Activated CD4-positive, alpha-beta T cell treated with anti-CD3 and anti-CD28 coated beads for 36 hours (primary cell): ENCODE measurements at regions of chr1 and their contacts with region 1.

Region 1: DNA sequence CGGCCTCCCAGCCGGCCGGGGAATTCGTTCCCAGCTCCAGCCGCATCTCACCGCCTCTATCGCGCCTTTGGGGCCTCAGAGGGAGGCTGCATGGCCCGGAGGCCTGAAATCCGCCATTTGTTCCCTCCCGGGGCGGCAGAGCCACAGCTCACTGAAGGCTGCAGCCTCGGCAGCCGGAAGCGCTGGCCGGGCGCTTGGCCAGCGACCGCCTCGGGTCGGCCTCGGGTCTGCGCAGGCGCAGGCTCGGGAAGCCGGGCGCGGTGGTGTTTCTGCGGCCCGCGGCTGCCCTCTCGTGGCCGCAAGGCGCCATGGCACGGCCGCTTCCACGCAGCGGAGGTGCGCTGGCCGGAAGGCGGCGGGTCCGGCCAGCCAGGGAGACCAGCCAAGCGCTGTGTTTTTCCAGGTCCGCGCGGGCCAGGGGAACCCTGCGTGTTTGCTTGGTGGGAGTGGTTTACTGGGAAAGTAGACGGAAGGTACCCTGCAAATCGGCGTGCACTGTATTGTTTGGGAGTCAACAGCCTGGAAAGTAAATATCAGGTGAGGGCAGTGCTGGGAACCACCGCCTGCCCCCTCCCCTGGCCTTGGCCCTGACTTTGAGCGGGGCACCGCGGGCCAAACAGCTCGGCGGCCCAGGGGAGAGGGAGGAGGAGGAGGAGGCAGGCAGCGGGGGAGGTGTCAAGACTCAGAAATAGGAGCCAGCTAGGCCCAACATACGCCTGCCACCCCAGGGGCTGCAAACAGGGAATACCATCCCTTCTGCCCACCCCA is 52.7 kb upstream of the CD34 start:
- DNase-seq: peak; percentile 90
- ATAC-seq: peak; percentile 82
- H3K4me3 Mint-ChIP-seq: peak overlapping the region; percentile 75
- H3K27ac Mint-ChIP-seq: peak overlapping the region; percentile 71
- H3K4me1 Mint-ChIP-seq: peaks cover 2% of the 10 kb centered on the region
- H3K27me3 Mint-ChIP-seq: peaks cover 18% of the 10 kb centered on the region

Region 2: DNA sequence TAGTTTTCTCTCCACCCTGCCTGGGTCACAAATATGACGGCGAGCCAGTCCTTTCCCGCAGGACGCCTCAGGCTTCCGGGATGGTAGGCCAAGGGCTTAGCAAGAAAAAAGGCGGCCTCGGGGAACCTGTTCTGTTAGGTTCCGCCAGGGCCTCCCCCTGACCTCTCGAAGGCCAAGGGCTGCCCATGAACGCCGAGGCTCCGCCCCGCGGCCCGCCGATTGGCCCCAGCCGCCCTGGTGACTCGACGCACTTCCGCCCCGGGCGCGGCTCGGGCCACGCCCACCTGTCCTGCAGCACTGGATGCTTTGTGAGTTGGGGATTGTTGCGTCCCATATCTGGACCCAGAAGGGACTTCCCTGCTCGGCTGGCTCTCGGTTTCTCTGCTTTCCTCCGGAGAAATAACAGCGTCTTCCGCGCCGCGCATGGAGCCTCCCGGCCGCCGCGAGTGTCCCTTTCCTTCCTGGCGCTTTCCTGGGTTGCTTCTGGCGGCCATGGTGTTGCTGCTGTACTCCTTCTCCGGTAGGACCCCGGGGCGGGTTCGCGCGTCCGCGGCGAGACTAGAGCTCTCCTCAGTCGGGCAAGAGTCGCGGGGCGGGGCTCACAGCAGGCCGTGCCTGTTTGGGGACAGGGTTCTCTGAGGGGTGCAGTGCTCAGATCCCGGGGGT is 211.7 kb before region 1 on chr1 and contains the start of gene CD46:
- CTCF ChIA-PET with region 1: no interaction called
- POLR2A ChIA-PET with region 1: no interaction called
- intact Hi-C with region 1: loop called in 1 of 2 experiments (anchors 1 kb)
- DNase-seq: peak; percentile 97
- ATAC-seq: peak; percentile 97
- H3K4me3 Mint-ChIP-seq: peak within 1 kb of the TSS; percentile 99
- H3K27ac Mint-ChIP-seq: peak within 1 kb of the TSS; percentile 97
- H3K4me1 Mint-ChIP-seq: peaks cover 62% of the 10 kb centered on the region
- H3K27me3 Mint-ChIP-seq: no peaks in the 10 kb centered on the region
- total RNA-seq, gene CD46: 92.2 to 92.7 TPM

Region 3: DNA sequence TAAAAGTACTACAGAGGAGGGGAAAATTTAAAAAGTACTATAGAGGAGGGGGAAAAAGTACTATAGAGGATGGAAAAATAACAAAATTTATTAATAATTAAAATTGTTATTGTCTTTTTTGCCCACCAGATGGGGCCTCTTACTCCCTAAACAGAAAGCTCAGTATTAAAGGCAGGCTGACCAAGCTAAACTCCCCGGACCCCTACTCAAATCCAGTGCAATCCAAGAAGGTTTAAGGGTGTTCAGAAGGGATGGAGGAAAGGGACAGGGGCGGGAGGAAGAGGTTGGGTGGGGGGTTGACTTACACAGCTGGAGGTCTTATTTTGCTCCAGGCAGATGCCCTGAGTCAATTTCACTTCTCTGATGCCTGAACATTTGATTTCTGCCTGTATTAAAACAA is 66.4 kb before region 1 on chr1:
- CTCF ChIA-PET with region 1: interaction called, 15 read pairs
- POLR2A ChIA-PET with region 1: no interaction called
- intact Hi-C with region 1: no loop called
- DNase-seq: no peak
- ATAC-seq: no peak
- H3K4me3 Mint-ChIP-seq: no peak overlapping the region
- H3K27ac Mint-ChIP-seq: no peak overlapping the region
- H3K4me1 Mint-ChIP-seq: no peaks in the 10 kb centered on the region
- H3K27me3 Mint-ChIP-seq: no peaks in the 10 kb centered on the region

Region 4: GRCh38 chr1:207973898-207974568 is 10.4 kb after region 1 on chr1:
- CTCF ChIA-PET with region 1: interaction called, 11 read pairs
- POLR2A ChIA-PET with region 1: no interaction called
- intact Hi-C with region 1: no loop called
- DNase-seq: no peak
- ATAC-seq: no peak
- H3K4me3 Mint-ChIP-seq: no peak overlapping the region
- H3K27ac Mint-ChIP-seq: no peak overlapping the region
- H3K4me1 Mint-ChIP-seq: no peaks in the 10 kb centered on the region
- H3K27me3 Mint-ChIP-seq: peaks cover 6% of the 10 kb centered on the region

Region 5: DNA sequence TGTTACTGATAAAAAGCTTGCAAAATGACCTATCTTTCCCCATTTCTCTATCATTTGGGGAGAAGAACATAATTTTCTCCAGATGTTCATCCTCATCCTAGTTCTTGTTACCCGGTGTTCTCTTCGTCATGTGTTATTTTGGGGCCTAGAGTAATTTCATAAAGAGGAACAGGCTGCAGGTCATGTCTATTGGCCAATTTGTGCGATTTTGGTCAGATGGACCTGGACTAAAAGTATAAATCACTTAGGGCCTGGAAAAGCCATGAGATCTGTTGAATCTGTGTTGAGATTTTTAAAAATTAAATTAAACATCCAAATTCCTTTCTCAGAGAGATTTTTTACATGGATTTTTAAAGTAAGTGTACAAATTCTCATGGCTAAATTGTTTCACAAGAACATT is 521.9 kb after region 1 on chr1:
- CTCF ChIA-PET with region 1: no interaction called
- POLR2A ChIA-PET with region 1: no interaction called
- intact Hi-C with region 1: no loop called
- DNase-seq: no peak
- ATAC-seq: no peak
- H3K4me3 Mint-ChIP-seq: no peak overlapping the region
- H3K27ac Mint-ChIP-seq: no peak overlapping the region
- H3K4me1 Mint-ChIP-seq: no peaks in the 10 kb centered on the region
- H3K27me3 Mint-ChIP-seq: peaks cover 4% of the 10 kb centered on the region